Posterior vena cava (tissue), 2 donors: ENCODE measurements at regions of chr18 and their contacts with region 1.

Region 1: GRCh38 chr18:45621061-45621511 is 5.8 kb downstream of the SLC14A2 start:
- DNase-seq: peak; percentile 56

Region 2: DNA sequence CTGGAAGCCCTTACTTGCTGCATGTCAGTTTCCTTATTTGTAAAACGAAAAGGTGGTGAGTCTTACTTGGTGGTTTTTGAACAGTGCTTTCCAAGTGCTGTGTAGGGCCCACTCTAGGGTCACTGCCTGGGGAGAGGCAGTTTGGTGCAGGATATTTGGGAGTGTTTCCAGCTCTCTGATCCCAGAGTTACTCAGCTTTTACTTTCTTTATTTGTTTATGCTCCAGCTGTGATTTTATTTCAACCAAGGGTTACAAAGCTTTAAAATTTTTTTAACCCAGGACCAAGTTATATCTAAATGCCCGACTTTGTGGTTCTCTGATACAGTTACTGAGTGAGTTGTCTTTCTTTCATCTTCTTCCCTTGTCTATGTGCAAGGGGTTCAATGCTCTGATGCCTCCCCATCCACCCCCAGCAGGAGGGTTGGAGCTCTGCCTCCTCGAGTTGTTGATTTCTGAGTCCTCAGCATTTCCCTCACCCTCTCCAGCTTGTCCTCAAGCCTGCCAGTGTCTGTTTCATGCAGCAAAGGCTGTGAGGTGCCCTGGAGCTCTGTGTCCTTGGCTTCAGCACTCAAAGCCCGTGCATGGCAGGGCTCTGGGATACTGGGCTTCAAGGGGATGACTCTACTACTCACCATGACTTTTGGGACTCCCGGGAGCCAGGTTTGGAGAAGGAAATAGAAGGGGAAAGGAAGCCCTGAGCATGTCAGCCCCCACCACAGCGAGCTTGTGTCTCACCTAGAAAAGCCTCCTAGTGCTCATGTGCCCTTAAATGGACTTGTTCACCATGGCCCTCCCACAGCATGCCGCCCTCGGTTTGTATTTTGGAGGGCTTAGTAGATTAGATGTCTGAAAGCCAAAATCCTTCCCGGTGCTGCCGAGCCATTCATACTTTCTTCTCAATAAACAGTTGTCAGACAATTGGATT is 703.6 kb before region 1 on chr18:
- intact Hi-C with region 1: loop called in 1 of 2 experiments (anchors 5 kb)
- DNase-seq: no peak

Region 3: DNA sequence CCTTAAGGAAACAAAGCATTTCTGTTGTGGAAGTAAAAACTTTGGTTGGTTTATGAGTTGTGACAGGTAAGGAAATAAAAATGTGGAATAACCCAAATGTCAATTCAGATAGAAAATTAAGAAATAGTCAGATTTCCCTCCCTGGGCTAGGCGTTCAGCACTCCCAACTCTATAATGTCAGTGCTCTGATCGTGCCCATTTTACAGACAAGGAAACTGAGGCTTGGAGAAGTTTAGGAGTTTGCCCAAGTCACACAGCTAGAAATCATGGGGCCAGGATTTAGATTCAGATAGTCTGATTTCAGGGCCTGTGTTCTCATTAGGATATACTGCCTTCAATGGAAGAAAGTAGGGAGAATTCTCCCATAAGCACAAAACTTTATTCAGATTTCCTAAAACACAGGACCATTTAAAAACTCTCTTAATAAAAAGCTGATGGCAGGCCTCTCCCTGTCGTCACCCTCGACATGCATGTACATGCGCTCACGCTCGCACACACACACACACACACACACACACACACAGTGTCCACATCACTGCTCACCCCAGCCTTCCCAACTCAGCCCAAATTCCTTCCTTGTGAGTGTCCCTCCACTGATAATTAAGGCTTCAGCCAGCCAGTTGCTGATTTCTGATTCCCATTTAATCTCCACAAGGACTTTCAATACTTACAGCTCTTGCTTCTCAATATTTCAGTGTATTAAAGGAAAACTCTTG is 54.9 kb before region 1 on chr18:
- intact Hi-C with region 1: loop called in 1 of 2 experiments (anchors 5 kb)
- DNase-seq: peak; percentile 84